OCI-LY7 (cell line): ENCODE measurements at regions of chr9 and their contacts with region 1.

Region 1: DNA sequence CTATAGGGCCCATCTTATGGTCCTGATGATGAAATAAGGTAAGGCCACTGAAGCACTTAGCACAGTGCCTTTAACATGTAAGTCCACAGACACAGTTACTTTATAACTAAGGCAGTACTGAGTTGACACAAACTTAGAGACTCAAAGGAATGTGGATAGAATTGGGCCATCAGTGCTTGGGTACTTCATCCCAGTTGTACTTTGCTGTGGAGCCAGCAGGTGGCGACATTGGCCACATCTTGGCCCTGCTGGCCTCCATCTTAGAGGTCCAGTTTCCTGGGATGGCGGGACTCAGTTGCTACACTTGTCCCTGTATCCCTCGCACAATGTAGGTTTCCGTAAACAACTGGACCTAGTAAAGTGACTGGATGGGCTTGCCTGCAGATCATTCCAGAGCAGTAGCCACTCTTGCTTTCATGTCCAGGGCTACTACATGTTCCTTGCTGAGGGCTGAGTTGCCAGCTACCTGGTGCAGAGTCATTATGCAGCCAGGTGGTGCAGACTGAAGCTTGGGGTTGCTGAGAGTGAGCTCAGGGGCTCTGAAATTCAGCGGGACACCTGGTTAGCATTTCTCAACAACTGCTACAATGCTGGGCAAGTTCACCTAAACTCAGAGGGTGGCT is 10.6 kb downstream of the MTAP start:
- DNase-seq: peak; percentile 72
- H3K4me3 ChIP-seq: no peak overlapping the region
- H3K27ac ChIP-seq: peak overlapping the region; percentile 32
- H3K4me1 ChIP-seq: peaks cover 22% of the 10 kb centered on the region
- CTCF ChIP-seq: peak; percentile 92

Region 2: GRCh38 chr9:22008736-22009562 is 195.9 kb after region 1 on chr9 and contains the start of gene CDKN2B:
- CTCF ChIA-PET with region 1: interaction called, 3 read pairs
- POLR2A ChIA-PET with region 1: interaction called, 5 read pairs
- intact Hi-C with region 1: loop called (anchors 1 kb)
- DNase-seq: peak; percentile 90
- H3K4me3 ChIP-seq: peak within 1 kb of the TSS; percentile 73
- H3K27ac ChIP-seq: no peak within 1 kb of the TSS
- H3K4me1 ChIP-seq: peaks cover 41% of the 10 kb centered on the region
- CTCF ChIP-seq: peak; percentile 94
- total RNA-seq, gene CDKN2B: 2.0 TPM in 2 replicates

Region 3: DNA sequence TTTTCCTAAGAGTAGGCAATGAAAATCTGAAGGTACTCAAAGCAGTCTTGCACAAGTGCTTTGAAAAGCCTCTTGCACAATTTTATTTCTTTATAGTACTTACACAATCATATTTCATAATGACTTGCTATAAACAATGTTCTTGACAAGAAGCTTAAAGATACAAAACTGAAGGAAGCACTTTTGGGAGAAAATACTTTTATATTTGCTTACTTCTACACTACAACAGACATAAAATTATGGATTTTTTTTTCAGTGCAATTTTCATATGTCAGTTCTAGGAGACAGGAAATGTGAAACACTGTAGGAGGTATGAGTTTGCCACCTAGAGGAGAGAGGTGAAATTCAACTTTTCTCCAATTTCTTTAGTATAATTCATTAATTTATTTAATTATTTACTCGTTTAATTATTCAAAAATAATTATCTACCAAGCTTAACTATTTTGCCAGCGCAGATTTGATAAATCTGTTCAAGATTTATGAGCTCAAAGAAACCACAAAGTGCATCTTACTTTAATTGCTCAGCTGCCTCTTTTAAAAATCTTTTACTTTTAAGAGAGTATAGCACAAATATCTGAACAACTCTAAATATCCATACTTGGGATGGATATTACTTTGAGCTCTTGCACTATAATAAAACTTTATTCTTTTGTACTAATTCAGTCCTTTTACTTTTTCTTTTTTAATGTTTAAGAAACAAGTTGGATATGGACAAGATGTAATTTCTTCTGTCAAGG is 225.1 kb after region 1 on chr9:
- CTCF ChIA-PET with region 1: interaction called, 5 read pairs
- POLR2A ChIA-PET with region 1: interaction called, 5 read pairs
- intact Hi-C with region 1: loop called (anchors 1 kb)
- DNase-seq: peak; percentile 60
- H3K4me3 ChIP-seq: no peak overlapping the region
- H3K27ac ChIP-seq: no peak overlapping the region
- H3K4me1 ChIP-seq: no peaks in the 10 kb centered on the region
- CTCF ChIP-seq: peak; percentile 84

Region 4: DNA sequence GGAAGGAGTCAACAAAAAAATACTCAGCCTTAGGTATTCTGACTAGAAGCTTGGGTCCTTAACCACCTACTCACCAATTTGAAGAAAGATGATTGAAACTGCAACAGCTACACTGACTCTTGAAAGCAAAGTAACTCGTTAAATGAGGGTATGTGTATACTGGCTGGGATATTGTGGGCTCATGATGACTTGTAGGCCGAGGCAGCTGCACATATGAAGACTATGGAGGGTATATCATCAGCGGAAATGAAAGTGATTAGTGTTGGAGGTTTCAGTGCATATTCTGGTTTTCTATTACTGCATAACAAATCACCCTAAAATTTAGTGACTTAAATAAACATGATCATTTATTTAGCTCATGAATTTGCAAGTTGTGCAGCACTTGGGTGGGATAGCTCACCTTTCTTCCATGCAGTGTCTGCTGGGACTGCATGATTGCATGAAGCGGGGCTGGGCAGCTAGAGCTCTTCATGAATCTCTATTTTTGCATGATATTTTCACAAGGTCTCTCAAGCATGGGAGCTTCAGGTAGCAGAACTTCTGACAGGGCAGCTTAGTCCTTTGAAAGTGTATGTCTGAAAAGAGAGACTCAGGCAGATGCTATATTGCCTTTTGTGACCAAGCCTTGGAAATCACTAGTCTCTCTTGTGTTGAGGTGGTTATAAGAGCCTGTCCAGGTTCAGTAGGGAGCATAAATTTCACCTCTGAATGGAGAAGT is 292.1 kb after region 1 on chr9:
- CTCF ChIA-PET with region 1: no interaction called
- POLR2A ChIA-PET with region 1: no interaction called
- intact Hi-C with region 1: loop called (anchors 5 kb)
- DNase-seq: peak; percentile 20
- H3K4me3 ChIP-seq: no peak overlapping the region
- H3K27ac ChIP-seq: no peak overlapping the region
- H3K4me1 ChIP-seq: peaks cover 11% of the 10 kb centered on the region
- CTCF ChIP-seq: no peak

Region 5: DNA sequence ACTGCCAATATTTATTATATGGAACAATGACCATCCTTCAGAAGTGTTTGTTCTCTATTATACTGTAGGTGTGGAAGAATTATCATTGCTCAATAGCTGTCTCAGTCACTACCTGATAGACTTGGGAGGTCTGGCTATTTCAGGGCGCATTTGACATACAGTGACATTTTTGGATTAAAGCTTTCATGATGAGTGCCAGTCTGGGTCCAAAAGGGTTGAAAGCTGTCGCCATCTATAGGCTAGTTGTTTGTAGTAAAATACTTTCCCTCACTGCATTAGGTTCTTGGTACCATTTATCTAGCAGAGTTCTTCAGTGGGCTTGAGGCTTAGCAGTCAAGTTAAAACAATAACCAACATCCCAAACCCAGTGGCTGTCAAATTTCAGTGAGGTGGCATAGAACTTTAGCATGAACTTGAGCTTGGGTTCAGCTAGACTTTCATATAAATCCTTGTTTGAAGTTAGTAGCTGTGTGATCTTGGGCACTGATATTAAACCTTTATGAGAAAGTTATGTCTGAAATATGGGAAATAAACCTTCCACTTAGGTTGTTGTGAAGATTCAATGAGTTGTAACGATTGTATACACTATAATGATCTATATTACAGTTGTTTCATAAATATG is 306.6 kb after region 1 on chr9:
- CTCF ChIA-PET with region 1: no interaction called
- POLR2A ChIA-PET with region 1: no interaction called
- intact Hi-C with region 1: loop called (anchors 5 kb)
- DNase-seq: peak; percentile 38
- H3K4me3 ChIP-seq: no peak overlapping the region
- H3K27ac ChIP-seq: no peak overlapping the region
- H3K4me1 ChIP-seq: no peaks in the 10 kb centered on the region
- CTCF ChIP-seq: peak; percentile 75

Region 6: DNA sequence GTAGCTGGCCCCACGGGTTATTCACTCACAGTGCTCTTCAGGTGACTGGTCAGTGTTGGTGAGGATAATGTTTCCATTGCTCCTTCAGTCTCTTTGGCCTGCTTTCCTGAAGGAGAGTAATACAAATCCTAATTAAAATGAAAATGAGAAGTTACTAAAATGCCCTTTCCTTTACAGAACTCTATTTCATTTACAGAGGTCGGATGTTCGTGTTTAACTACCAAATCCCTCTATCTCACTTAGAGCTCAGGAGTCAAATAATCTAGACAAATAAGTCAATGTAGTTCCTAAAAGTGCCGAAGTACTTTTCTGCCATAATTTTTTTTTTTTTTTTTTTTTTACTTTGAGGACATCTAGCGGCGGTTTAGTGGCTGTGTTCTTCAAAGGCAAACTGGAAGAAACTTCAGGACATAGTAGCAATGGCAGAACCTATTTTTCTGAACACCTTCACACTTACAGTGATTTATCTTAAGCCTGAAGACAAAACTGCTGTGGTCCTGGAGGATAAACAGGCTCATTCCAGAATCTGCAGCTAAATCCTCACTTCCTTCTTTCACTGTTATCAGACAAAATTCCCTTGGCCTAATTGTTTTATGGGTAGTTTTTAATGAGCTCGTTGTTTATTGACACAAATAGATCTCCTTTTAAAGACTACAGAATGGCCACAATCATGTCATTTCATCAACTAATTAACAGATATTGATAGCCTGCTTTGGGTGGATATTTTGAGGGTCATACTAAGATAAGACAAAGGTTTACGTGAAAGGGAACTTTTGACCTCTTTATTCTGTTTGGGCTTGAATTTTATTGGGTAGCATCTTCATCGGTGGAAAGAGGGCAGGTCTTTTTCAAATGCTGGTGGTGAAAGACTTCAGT is 426.0 kb after region 1 on chr9:
- CTCF ChIA-PET with region 1: interaction called, 4 read pairs
- POLR2A ChIA-PET with region 1: interaction called, 3 read pairs
- intact Hi-C with region 1: loop called (anchors 1 kb)
- DNase-seq: peak; percentile 75
- H3K4me3 ChIP-seq: no peak overlapping the region
- H3K27ac ChIP-seq: no peak overlapping the region
- H3K4me1 ChIP-seq: peaks cover 38% of the 10 kb centered on the region
- CTCF ChIP-seq: peak; percentile 76

Region 7: GRCh38 chr9:22452415-22453010 is 639.5 kb after region 1 on chr9:
- CTCF ChIA-PET with region 1: interaction called, 3 read pairs
- POLR2A ChIA-PET with region 1: no interaction called
- intact Hi-C with region 1: loop called (anchors 5 kb)
- DNase-seq: peak; percentile 53
- H3K4me3 ChIP-seq: no peak overlapping the region
- H3K27ac ChIP-seq: no peak overlapping the region
- H3K4me1 ChIP-seq: no peaks in the 10 kb centered on the region
- CTCF ChIP-seq: peak; percentile 99